GM12878 (cell line): ENCODE measurements at regions of chr18 and their contacts with region 1.

Region 1: GRCh38 chr18:20971886-20972267 is 139.7 kb downstream of the ROCK1 start:
- DNase-seq: no peak
- ATAC-seq: peak; percentile 85
- H3K4me3 ChIP-seq: no peak overlapping the region
- H3K27ac ChIP-seq: no peak overlapping the region
- H3K4me1 ChIP-seq: no peaks in the 10 kb centered on the region
- H3K27me3 ChIP-seq: no peaks in the 10 kb centered on the region
- CTCF ChIP-seq: peak; percentile 26 to 50 (median 49); a peak in 4 of 6 replicates
- EP300 ChIP-seq: no peak
- POLR2A ChIP-seq: no peak
- RAD21 ChIP-seq: peak; percentile 37; the same call in 1 of the 2 replicates

Region 2: DNA sequence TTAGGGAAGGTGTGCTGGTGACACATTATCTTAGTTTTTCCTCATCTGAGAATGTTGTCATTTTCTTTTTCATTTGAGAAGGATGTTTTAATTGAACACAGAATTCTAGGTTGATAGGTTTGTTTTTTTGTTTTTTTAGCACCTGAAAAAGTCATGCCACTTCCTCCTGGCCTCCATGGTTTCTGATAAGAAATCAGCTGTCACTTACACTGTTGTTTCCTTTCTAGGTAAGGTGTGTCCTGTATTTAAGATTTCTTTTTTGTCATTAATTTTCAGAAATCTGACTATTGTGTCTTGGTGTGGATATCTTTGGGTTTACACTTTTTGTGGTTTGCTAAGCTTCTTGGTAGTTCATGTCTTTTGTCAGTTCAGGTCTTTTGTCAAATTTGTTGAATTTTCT is 40.4 kb after region 1 on chr18:
- CTCF ChIA-PET with region 1: no interaction called
- POLR2A ChIA-PET with region 1: no interaction called
- RAD21 ChIA-PET with region 1: no interaction called
- SMC1A ChIA-PET with region 1: interaction called, 3 read pairs
- in situ Hi-C with region 1: loop called (anchors 5 kb)
- intact Hi-C with region 1: no loop called
- DNase-seq: no peak
- ATAC-seq: no peak
- H3K4me3 ChIP-seq: no peak overlapping the region
- H3K27ac ChIP-seq: no peak overlapping the region
- H3K4me1 ChIP-seq: no peaks in the 10 kb centered on the region
- H3K27me3 ChIP-seq: no peaks in the 10 kb centered on the region
- CTCF ChIP-seq: no peak
- EP300 ChIP-seq: no peak
- POLR2A ChIP-seq: no peak
- RAD21 ChIP-seq: no peak

Region 3: DNA sequence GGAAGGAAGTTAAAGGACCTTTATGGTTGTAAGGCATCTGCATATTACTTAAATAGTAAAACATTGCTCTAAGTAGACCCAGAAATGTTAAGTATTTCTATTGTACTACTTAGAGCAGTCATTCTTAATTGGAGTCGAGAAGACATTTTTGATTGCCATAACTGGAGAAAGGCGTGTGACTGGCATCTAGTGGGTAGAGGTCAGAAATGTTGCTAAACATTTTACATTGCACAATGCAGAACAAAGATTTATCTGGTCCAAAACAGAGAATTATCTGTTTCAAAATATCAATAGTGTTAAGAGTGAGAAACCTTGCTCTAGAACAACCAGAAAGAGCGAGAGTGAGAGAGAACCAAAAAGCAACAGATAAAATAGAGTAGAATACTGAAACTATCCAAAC is 163.0 kb after region 1 on chr18:
- CTCF ChIA-PET with region 1: no interaction called
- POLR2A ChIA-PET with region 1: no interaction called
- RAD21 ChIA-PET with region 1: no interaction called
- SMC1A ChIA-PET with region 1: no interaction called
- in situ Hi-C with region 1: no loop called
- intact Hi-C with region 1: loop called (anchors 5 kb)
- DNase-seq: no peak
- ATAC-seq: peak; percentile 59
- H3K4me3 ChIP-seq: no peak overlapping the region
- H3K27ac ChIP-seq: no peak overlapping the region
- H3K4me1 ChIP-seq: no peaks in the 10 kb centered on the region
- H3K27me3 ChIP-seq: no peaks in the 10 kb centered on the region
- CTCF ChIP-seq: peak; percentile 23 to 52 (median 24); a peak in 4 of 6 replicates
- EP300 ChIP-seq: no peak
- POLR2A ChIP-seq: no peak
- RAD21 ChIP-seq: peak; percentile 69